Psoas muscle (tissue), 8 donors: ENCODE measurements at regions of chr12 and their contacts with region 1.

Region 1: GRCh38 chr12:103868215-103868614 is 27.2 kb upstream of the NT5DC3 start:
- DNase-seq: no peak
- ATAC-seq: no peak
- H3K4me3 ChIP-seq: no peak overlapping the region
- H3K27ac ChIP-seq: no peak overlapping the region
- H3K4me1 ChIP-seq: no peaks in the 10 kb centered on the region
- H3K27me3 ChIP-seq: no peaks in the 10 kb centered on the region
- CTCF ChIP-seq: no peak

Region 2: GRCh38 chr12:103632554-103633216 is 235.5 kb before region 1 on chr12:
- intact Hi-C with region 1: loop called (anchors 5 kb)
- DNase-seq: peak; percentile 18 to 56
- ATAC-seq: peak in 2 of 4 donors; percentile 33 to 44
- H3K4me3 ChIP-seq: no peak overlapping the region
- H3K27ac ChIP-seq: no peak overlapping the region
- H3K4me1 ChIP-seq: peaks cover 3% of the 10 kb centered on the region
- H3K27me3 ChIP-seq: no peaks in the 10 kb centered on the region
- CTCF ChIP-seq: peak; percentile 43